Activated B cell treated with CpG ODN at 0.5 μM for 24 hours (primary cell): ENCODE measurements at regions of chr6 and their contacts with region 1.

Region 1: GRCh38 chr6:97497713-97498331 is 214.8 kb upstream of the MMS22L start:
- DNase-seq: peak; percentile 34
- ATAC-seq: peak; percentile 68
- H3K4me3 Mint-ChIP-seq: no peak overlapping the region
- H3K27ac Mint-ChIP-seq: no peak overlapping the region
- H3K4me1 Mint-ChIP-seq: no peaks in the 10 kb centered on the region
- H3K27me3 Mint-ChIP-seq: peaks cover 9% of the 10 kb centered on the region
- CTCF ChIP-seq: peak; percentile 91

Region 2: GRCh38 chr6:97175806-97176205 is 322.0 kb before region 1 on chr6:
- CTCF ChIA-PET with region 1: no interaction called
- POLR2A ChIA-PET with region 1: no interaction called
- intact Hi-C with region 1: no loop called
- DNase-seq: no peak
- ATAC-seq: no peak
- H3K4me3 Mint-ChIP-seq: no peak overlapping the region
- H3K27ac Mint-ChIP-seq: no peak overlapping the region
- H3K4me1 Mint-ChIP-seq: no peaks in the 10 kb centered on the region
- H3K27me3 Mint-ChIP-seq: no peaks in the 10 kb centered on the region
- CTCF ChIP-seq: no peak

Region 3: DNA sequence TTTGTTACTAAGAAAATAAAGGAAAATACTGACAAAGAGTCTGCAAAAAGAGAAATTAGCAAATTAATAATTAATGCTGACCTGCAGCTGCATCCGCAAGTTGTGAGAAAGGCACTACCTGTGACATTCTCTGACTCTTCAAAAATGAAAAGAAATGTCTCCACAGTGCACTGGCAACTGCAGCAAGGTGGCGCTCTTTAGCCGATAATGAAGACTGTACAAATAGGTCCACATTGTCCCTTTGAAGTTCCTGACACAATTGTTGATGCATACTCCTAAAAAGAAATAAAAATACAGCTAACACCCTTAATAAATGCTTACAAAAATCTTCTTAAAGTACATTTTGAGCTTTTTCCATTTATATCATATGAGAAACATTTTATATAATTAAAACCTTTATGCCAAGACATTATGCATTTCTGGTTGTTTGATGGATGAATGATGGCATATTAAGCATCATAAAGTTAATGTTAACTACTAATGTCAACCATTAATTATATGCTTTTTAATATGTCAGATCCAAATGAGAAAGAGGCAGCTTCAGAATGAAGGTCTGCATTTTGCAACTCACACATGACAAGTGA is 311.3 kb before region 1 on chr6:
- CTCF ChIA-PET with region 1: no interaction called
- POLR2A ChIA-PET with region 1: no interaction called
- intact Hi-C with region 1: loop called (anchors 2 kb)
- DNase-seq: peak; percentile 15
- ATAC-seq: peak; percentile 71
- H3K4me3 Mint-ChIP-seq: no peak overlapping the region
- H3K27ac Mint-ChIP-seq: no peak overlapping the region
- H3K4me1 Mint-ChIP-seq: no peaks in the 10 kb centered on the region
- H3K27me3 Mint-ChIP-seq: no peaks in the 10 kb centered on the region
- CTCF ChIP-seq: peak; percentile 99

Region 4: DNA sequence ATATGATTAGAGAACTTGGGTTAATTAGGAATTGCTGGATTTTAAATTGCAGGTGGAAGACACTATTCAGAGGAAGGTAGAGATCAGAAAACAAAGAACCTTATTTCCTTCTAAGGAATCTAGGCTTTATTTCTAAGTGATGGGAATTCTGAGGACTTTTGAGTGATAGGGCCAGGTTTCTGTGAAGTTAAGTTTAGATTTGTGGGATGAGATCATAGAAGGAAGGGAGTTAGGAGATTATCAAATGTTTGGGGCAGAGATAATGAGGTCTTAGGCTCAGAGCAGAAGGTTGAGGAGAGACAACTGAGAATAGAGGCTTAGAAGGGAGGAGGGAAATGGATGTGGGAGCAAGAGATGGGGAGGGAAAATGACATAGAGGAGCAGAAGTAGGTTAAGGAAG is 105.1 kb before region 1 on chr6:
- CTCF ChIA-PET with region 1: no interaction called
- POLR2A ChIA-PET with region 1: no interaction called
- intact Hi-C with region 1: no loop called
- DNase-seq: no peak
- ATAC-seq: no peak
- H3K4me3 Mint-ChIP-seq: no peak overlapping the region
- H3K27ac Mint-ChIP-seq: no peak overlapping the region
- H3K4me1 Mint-ChIP-seq: no peaks in the 10 kb centered on the region
- H3K27me3 Mint-ChIP-seq: peaks cover 11% of the 10 kb centered on the region
- CTCF ChIP-seq: no peak

Region 5: GRCh38 chr6:97925504-97925903 is 427.7 kb after region 1 on chr6:
- CTCF ChIA-PET with region 1: interaction called, 4 read pairs
- POLR2A ChIA-PET with region 1: no interaction called
- intact Hi-C with region 1: loop called (anchors 1 kb)
- DNase-seq: no peak
- ATAC-seq: no peak
- H3K4me3 Mint-ChIP-seq: no peak overlapping the region
- H3K27ac Mint-ChIP-seq: no peak overlapping the region
- H3K4me1 Mint-ChIP-seq: no peaks in the 10 kb centered on the region
- H3K27me3 Mint-ChIP-seq: no peaks in the 10 kb centered on the region
- CTCF ChIP-seq: no peak

Region 6: DNA sequence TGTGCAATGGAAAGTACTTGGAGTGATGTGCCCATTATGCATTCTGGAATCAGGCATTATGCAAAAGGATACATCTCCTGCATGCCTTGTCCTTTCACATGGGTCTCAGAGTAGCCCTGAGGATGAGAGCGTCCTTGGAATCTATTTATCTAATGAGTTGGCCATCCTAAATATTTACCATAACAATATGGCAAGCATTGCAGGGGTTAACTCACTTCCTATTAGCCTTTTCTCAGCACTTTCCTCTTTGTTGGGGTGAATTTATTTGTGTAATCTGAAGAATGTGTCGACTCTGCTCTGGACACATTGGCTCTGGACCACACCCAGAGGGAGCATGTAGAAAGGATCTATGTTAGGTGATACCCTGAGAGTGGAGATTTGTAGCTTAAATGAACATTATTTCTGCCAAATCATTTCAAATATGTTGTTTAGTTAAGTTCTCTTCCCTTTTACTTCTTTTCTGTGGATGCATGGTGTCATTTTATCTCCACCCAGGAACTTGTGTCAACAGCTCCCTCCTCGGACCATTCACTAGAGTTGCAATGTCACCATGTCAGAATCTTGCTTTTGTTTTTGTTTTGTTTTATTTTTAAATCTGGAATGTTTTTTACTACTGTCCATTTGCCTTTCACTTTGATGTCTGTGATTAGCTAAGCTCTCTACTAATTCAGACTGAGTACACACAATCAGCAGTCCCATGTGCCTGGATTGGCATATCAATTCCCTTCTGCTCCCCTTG is 542.2 kb after region 1 on chr6:
- CTCF ChIA-PET with region 1: no interaction called
- POLR2A ChIA-PET with region 1: no interaction called
- intact Hi-C with region 1: loop called (anchors 5 kb)
- DNase-seq: no peak
- ATAC-seq: no peak
- H3K4me3 Mint-ChIP-seq: no peak overlapping the region
- H3K27ac Mint-ChIP-seq: no peak overlapping the region
- H3K4me1 Mint-ChIP-seq: no peaks in the 10 kb centered on the region
- H3K27me3 Mint-ChIP-seq: peaks cover 3% of the 10 kb centered on the region
- CTCF ChIP-seq: no peak

Region 7: DNA sequence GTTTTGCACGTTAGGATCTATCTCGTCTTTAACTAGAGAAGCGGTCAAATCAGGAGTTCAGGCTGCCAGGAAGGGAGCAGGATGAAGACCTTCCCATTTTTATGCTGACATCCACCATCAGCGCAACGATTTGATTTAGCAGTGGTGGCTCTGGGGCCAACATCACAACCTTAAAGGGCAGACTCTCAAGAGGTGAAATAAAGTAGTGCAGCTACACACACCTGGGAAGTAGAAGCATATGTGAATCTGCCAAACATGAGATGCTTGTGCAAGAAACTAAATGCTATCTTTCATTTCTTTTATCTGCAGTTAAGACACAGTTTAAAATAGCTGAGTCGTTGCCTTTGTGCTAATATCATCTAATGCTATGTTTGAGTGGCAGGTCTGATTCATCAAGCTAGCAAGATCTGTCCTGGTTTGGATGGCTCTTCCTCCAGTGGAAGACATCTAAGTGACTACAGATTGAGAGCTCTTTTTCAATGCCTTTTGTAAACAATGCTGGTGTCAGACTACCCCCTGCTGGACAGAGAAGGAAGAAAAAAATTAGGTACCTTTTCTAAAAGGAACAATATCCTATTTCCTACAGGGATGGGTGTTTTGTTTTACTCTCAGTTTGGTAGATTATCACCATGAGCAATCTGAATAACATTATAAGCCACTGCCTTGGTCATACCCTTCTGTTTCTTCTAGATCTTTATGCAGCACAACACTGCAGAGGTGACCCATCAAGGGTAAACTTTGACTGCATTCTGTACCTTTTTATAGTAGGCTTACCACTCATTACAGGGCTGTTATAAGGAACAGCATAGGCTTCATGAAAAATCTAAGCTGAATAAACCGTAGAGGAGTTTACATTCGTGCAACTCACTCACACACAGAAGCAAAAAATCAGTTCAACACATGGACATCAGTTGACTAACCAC is 1621.5 kb after region 1 on chr6:
- CTCF ChIA-PET with region 1: interaction called, 30 read pairs
- POLR2A ChIA-PET with region 1: no interaction called
- intact Hi-C with region 1: loop called (anchors 1 kb)
- DNase-seq: no peak
- ATAC-seq: no peak
- H3K4me3 Mint-ChIP-seq: no peak overlapping the region
- H3K27ac Mint-ChIP-seq: no peak overlapping the region
- H3K4me1 Mint-ChIP-seq: no peaks in the 10 kb centered on the region
- H3K27me3 Mint-ChIP-seq: peaks cover 15% of the 10 kb centered on the region
- CTCF ChIP-seq: no peak